ENCODE measurements at regions of chr1 and their contacts with region 1.

Region 1: GRCh38 chr1:27111626-27112573 is 43.0 kb downstream of the SLC9A1 start:
- DNase-seq: peak; percentile 80
- H3K4me3 ChIP-seq: no peak overlapping the region
- H3K27ac ChIP-seq: peak overlapping the region; percentile 43 to 69 (median 66)
- H3K4me1 ChIP-seq: peaks cover 23 to 57% (median 32%) of the 10 kb centered on the region in 4 donors
- H3K27me3 ChIP-seq: no peaks in the 10 kb centered on the region
- CTCF ChIP-seq: peak in 4 of 5 experiments; percentile 23 to 67 (median 44)
- EP300 ChIP-seq: no peak
- POLR2A ChIP-seq: no peak

Region 2: DNA sequence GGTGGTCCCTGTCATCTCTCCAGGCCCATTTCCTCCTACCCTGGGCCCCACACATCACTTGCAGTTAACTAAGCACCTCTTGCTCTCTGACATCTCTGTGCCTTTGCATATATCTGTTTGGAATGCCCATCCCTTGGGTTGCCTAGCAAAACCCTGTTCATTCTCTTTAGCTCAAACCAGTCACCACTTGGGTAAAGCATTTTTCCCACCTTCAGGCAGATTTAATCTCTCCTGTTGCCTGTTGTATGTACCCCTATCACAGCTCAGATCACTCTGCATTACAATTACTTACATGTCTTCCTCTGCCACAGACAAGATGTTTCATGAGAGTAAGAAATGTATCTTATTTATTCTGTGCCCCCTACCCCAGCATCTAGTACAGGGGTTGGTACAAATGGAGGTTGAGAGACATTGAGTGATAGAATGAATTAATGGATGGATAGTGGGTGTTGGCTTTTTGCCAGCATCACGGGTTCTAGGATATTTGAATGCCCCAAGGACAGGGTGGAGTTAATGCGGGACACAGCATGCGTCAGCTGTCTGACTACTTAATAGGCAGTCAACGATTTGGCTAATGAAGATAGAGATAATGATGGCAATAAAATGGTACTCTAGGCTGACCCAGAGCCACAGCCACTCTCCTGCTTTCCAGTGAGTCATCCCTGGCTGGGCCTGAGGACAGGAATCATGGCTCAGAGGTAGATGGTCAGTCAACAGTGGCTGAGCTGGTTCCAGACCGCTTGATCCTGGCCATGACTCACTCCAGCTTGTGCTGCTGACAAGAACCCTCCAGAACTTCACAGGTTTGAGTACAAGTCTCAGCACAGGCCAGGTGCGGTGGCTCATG is 204.6 kb before region 1 on chr1:
- in situ Hi-C with region 1: no loop called
- intact Hi-C with region 1: no loop called
- DNase-seq: peak; percentile 41
- H3K4me3 ChIP-seq: no peak overlapping the region
- H3K27ac ChIP-seq: no peak overlapping the region
- H3K4me1 ChIP-seq: peaks cover 0 to 17% (median 10%) of the 10 kb centered on the region in 4 donors
- H3K27me3 ChIP-seq: no peaks in the 10 kb centered on the region
- CTCF ChIP-seq: no peak
- EP300 ChIP-seq: no peak
- POLR2A ChIP-seq: no peak

Region 3: DNA sequence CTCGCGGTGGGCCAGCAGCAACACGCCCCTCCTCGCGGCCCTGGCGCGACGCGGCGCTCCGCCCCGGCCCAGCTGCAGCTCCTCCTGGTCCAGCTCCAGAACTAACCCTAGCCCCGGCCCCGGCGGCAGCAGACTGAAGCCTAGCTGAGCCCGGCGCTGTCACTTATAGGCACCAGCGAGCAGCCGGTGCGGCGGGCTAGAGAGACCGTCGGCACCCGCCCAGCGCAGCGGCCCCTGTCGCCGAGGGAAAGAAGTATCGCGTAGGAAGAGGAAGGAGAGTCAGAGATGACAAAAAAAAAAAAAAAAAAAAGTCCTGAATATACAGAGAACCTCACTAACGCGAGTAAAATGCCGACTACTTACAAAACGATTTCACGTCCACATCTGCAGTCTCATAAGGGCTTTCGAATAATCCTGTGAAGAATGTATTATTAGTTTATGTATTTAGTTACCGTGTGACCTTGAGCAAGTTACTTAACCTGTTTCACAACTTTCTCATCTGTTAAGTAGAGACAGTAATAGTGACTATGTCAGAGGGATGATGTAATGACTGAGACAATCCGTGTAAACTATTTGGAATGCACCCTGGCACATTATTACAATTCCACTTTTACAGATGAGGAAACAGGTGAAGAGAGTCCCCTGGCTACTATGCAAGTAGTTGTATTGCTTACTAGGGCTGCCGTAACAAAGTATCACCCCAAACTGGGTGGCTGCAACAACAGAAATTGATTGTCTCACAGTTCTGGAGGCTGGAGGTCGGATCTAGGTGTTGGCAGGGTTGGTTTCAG is 43.3 kb after region 1 on chr1 and contains the start of gene SLC9A1:
- in situ Hi-C with region 1: no loop called
- intact Hi-C with region 1: loop called (anchors 5 kb)
- DNase-seq: peak; percentile 97
- H3K4me3 ChIP-seq: peak within 1 kb of the TSS; percentile 64 to 95 (median 78)
- H3K27ac ChIP-seq: peak within 1 kb of the TSS; percentile 90 to 97 (median 92)
- H3K4me1 ChIP-seq: peaks cover 34 to 50% (median 39%) of the 10 kb centered on the region in 4 donors
- H3K27me3 ChIP-seq: no peaks in the 10 kb centered on the region
- CTCF ChIP-seq: peak; percentile 68 to 90 (median 76)
- EP300 ChIP-seq: peak; percentile 11
- POLR2A ChIP-seq: peak; percentile 98
- total RNA-seq, gene SLC9A1: 17.9 to 140 (median 101) TPM

Measured in transverse colon (tissue), 4 donors.